Psoas muscle (tissue), 8 donors: ENCODE measurements at regions of chr6 and their contacts with region 1.

Region 1: GRCh38 chr6:113994918-113995342 is 24.0 kb upstream of the HDAC2 start:
- DNase-seq: no peak
- ATAC-seq: peak; percentile 70 to 88 (median 82)
- H3K4me3 ChIP-seq: no peak overlapping the region
- H3K27ac ChIP-seq: peak overlapping the region; percentile 34
- H3K4me1 ChIP-seq: peaks cover 25% of the 10 kb centered on the region
- H3K27me3 ChIP-seq: no peaks in the 10 kb centered on the region
- CTCF ChIP-seq: peak; percentile 41

Region 2: GRCh38 chr6:114108119-114109002 is 113.4 kb after region 1 on chr6:
- intact Hi-C with region 1: loop called in 1 of 2 experiments (anchors 10 kb)
- DNase-seq: peak; percentile 57 to 66
- ATAC-seq: peak in 3 of 4 donors; percentile 29 to 61 (median 55)
- H3K4me3 ChIP-seq: no peak overlapping the region
- H3K27ac ChIP-seq: no peak overlapping the region
- H3K4me1 ChIP-seq: no peaks in the 10 kb centered on the region
- H3K27me3 ChIP-seq: no peaks in the 10 kb centered on the region
- CTCF ChIP-seq: peak; percentile 42